Astrocyte of the cerebellum (primary cell): ENCODE measurements at regions of chr9 and their contacts with region 1.

Region 1: DNA sequence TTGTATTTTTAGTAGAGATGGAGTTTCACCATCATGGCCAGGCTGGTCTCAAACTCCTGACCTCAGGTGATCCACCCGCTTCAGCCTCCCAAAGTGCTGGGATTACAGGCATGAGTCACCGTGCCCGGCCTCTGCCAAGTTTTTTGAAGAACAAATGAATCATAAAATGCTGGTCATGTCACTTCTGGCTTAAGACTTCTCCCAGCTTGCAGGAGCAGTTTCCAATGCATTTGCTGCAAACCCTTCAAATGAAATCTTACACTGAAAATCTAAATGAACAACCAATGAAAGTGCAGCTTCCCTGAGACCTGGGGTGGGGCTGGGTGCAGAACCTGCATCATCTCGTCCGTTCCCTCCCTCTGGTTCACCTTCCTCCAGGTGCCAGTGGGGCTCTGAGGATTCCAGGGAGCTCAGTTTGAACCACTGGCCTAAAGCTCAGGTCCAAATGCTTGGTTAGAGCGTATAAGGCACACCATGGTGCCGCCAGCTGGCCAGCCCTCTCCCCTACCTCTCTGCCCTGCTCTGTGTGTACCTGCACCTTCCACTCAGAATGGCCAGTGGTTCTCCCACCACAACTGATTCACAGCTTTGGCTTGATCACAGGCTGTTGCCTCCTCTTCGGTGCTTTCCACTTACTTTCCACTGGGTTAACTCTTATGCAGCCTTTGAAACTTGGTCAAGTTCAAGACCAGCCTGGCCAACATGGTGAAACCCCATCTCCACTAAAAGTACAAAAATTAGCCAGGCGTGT is 39.7 kb upstream of the FUBP3 start:
- DNase-seq: peak; percentile 46
- H3K4me3 ChIP-seq: no peak overlapping the region
- CTCF ChIP-seq: no peak

Region 2: GRCh38 chr9:130579738-130580463 is 40.3 kb after region 1 on chr9:
- in situ Hi-C with region 1: loop called (anchors 5 kb)
- DNase-seq: no peak
- H3K4me3 ChIP-seq: peak overlapping the region; percentile 76
- CTCF ChIP-seq: no peak

Region 3: GRCh38 chr9:130610862-130611707 is 71.4 kb after region 1 on chr9:
- in situ Hi-C with region 1: no loop called
- DNase-seq: no peak
- H3K4me3 ChIP-seq: no peak overlapping the region
- CTCF ChIP-seq: no peak